ENCODE measurements at regions of chr6 and their contacts with region 1.

Region 1: GRCh38 chr6:122491919-122492555 is 20.4 kb upstream of the SERINC1 start:
- DNase-seq: peak; percentile 37 to 63
- ATAC-seq: peak; percentile 80 to 93 (median 88)
- H3K4me3 ChIP-seq: peak overlapping the region in 2 of 10 donors; percentile 13 to 15
- H3K27ac ChIP-seq: no peak overlapping the region
- H3K4me1 ChIP-seq: peaks cover 0 to 4% (median 0%) of the 10 kb centered on the region in 9 donors
- H3K27me3 ChIP-seq: no peaks in the 10 kb centered on the region
- CTCF ChIP-seq: peak; percentile 63 to 90 (median 86)

Region 2: GRCh38 chr6:122381497-122382265 is 110.4 kb before region 1 on chr6:
- intact Hi-C with region 1: loop called in 1 of 10 experiments (anchors 10 kb)
- DNase-seq: peak in 1 of 2 donors; percentile 50
- ATAC-seq: peak in 7 of 8 donors; percentile 70 to 77 (median 74)
- H3K4me3 ChIP-seq: no peak overlapping the region
- H3K27ac ChIP-seq: no peak overlapping the region
- H3K4me1 ChIP-seq: no peaks in the 10 kb centered on the region
- H3K27me3 ChIP-seq: peaks cover 0 to 6% (median 0%) of the 10 kb centered on the region in 7 donors
- CTCF ChIP-seq: peak; percentile 29 to 86 (median 78)

Region 3: GRCh38 chr6:122520179-122520578 is 28.1 kb after region 1 on chr6:
- intact Hi-C with region 1: loop called in 2 of 10 experiments (anchors 2 to 5 kb)
- DNase-seq: no peak
- ATAC-seq: no peak
- H3K4me3 ChIP-seq: no peak overlapping the region
- H3K27ac ChIP-seq: no peak overlapping the region
- H3K4me1 ChIP-seq: no peaks in the 10 kb centered on the region
- H3K27me3 ChIP-seq: peaks cover 0 to 4% (median 0%) of the 10 kb centered on the region in 7 donors
- CTCF ChIP-seq: no peak

Region 4: GRCh38 chr6:122530440-122531046 is 38.5 kb after region 1 on chr6:
- intact Hi-C with region 1: loop called (anchors 1 to 5 kb)
- DNase-seq: peak in 1 of 2 donors; percentile 57
- ATAC-seq: peak in 6 of 8 donors; percentile 53 to 87 (median 72)
- H3K4me3 ChIP-seq: no peak overlapping the region
- H3K27ac ChIP-seq: no peak overlapping the region
- H3K4me1 ChIP-seq: no peaks in the 10 kb centered on the region
- H3K27me3 ChIP-seq: peaks cover 0 to 29% (median 6%) of the 10 kb centered on the region in 7 donors
- CTCF ChIP-seq: peak; percentile 70 to 95 (median 89)

Region 5: GRCh38 chr6:122653094-122653493 is 161.1 kb after region 1 on chr6:
- intact Hi-C with region 1: no loop called
- DNase-seq: no peak
- ATAC-seq: no peak
- H3K4me3 ChIP-seq: no peak overlapping the region
- H3K27ac ChIP-seq: no peak overlapping the region
- H3K4me1 ChIP-seq: no peaks in the 10 kb centered on the region
- H3K27me3 ChIP-seq: peaks cover 0 to 5% (median 0%) of the 10 kb centered on the region in 7 donors
- CTCF ChIP-seq: no peak